PC-9 (cell line): ENCODE measurements at regions of chr1 and their contacts with region 1.

Region 1: DNA sequence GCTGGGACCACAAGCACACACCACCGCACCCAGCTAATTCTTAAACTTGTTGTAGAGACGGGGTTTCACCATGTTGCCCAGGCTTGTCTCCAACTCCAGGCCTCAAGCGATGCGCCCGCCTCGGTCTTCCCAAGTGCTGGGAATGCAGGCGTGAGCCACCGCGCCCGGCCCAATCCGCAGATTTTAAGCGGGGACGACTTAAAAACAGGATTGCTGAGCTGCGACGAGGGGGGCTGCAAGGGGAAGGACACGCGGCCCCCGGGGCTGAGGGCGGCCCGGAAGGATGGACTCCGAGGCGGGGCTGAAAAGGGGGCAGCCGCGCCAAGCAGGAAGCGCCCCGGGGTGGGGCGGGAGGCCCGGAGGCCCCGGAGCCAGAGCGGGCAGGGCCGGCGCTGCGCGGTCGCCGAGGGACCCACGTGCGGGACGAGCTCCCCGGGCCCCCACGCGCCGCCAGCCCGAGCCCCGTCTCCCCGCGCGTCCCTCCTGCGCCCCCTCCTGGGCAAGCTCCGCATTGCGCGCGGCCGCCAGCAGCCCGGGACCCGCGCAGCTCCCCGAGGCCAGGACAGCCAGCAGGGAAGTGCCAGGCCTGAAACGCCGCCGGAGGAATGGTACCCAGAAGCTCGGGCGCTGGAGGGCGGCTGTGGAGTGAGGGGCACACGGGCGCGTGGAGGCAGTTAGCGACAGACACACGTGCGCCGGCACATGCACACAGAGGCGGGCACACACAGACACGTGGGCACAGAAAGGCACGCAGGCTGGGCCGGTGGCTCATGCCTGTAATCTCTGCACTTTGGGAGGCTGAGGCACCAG is 5.5 kb upstream of the PRKCZ start:
- DNase-seq: peak in 1 of 2 experiments; percentile 72
- H3K4me3 ChIP-seq: no peak overlapping the region
- H3K27ac ChIP-seq: no peak overlapping the region
- H3K4me1 ChIP-seq: no peaks in the 10 kb centered on the region
- H3K27me3 ChIP-seq: peaks cover 22% of the 10 kb centered on the region
- CTCF ChIP-seq: peak; percentile 66

Region 2: GRCh38 chr1:1567891-1568291 is 476.8 kb before region 1 on chr1:
- CTCF ChIA-PET with region 1: no interaction called
- POLR2A ChIA-PET with region 1: no interaction called
- intact Hi-C with region 1: no loop called
- DNase-seq: no peak
- H3K4me3 ChIP-seq: no peak overlapping the region
- H3K27ac ChIP-seq: no peak overlapping the region
- H3K4me1 ChIP-seq: no peaks in the 10 kb centered on the region
- H3K27me3 ChIP-seq: no peaks in the 10 kb centered on the region
- CTCF ChIP-seq: no peak

Region 3: GRCh38 chr1:1959840-1960479 is 84.8 kb before region 1 on chr1:
- CTCF ChIA-PET with region 1: interaction called, 4 read pairs
- POLR2A ChIA-PET with region 1: no interaction called
- intact Hi-C with region 1: loop called (anchors 1 kb)
- DNase-seq: peak; percentile 61 to 83
- H3K4me3 ChIP-seq: no peak overlapping the region
- H3K27ac ChIP-seq: no peak overlapping the region
- H3K4me1 ChIP-seq: no peaks in the 10 kb centered on the region
- H3K27me3 ChIP-seq: peaks cover 54% of the 10 kb centered on the region
- CTCF ChIP-seq: peak; percentile 91